ENCODE measurements at regions of chr16 and their contacts with region 1.

Region 1: GRCh38 chr16:4183237-4184036 is 58.4 kb downstream of the SRL start:
- DNase-seq: peak; percentile 96
- ATAC-seq: peak; percentile 96

Region 2: DNA sequence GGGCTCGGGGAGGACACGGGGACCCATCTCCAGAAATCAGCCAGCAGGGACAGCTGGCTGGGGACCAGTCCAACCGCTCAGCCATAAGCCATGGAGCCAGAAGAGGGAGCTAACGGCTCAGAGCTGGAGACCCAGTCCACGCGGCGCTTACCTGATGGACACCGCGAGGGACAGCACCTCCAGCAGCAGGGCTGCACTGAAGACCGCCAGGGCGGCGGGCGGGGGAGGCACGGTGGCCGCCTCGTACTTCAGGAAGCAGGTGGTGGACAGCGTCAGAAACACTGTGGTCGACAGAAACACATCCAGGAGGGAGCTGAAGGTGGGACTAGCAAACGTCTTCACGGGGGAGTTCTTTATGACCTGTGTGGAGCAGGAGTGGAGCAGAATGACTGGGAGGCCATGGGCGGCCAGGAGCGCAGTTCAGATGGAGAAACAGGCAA is 200.3 kb before region 1 on chr16:
- intact Hi-C with region 1: loop called (anchors 5 kb)
- DNase-seq: peak; percentile 76
- ATAC-seq: peak; percentile 90

Measured in Right ventricle myocardium inferior (tissue), 1 donor.